Ascending aorta (tissue), 2 donors: ENCODE measurements at regions of chr7 and their contacts with region 1.

Region 1: DNA sequence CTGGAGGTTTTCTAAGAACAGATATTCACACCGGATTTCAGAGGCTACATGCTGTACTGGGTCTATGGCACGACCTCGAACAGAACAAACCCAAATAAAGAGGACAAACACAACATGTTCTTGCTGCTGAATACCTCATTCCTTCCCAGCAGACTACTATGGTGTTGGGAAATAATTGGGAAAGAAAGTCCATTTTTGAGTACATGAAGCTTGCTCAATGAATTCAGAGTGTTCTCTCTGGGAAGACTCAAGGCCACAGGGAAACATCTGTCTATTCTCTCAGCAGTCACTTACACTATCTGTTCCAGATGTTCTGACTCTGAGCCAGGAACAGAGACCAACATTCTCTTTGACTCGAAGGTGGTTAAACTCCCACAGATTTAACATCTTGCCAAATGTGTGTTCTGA is 30.9 kb downstream of the LAMB1 start:
- DNase-seq: no peak
- H3K4me3 ChIP-seq: no peak overlapping the region
- H3K27ac ChIP-seq: peak overlapping the region; percentile 67 to 95
- H3K4me1 ChIP-seq: peaks cover 0 to 34% of the 10 kb centered on the region in 2 donors
- H3K27me3 ChIP-seq: no peaks in the 10 kb centered on the region
- CTCF ChIP-seq: no peak

Region 2: GRCh38 chr7:107836237-107837144 is 135.6 kb before region 1 on chr7:
- intact Hi-C with region 1: no loop called
- DNase-seq: no peak
- H3K4me3 ChIP-seq: no peak overlapping the region
- H3K27ac ChIP-seq: no peak overlapping the region
- H3K4me1 ChIP-seq: no peaks in the 10 kb centered on the region
- H3K27me3 ChIP-seq: no peaks in the 10 kb centered on the region
- CTCF ChIP-seq: no peak

Region 3: GRCh38 chr7:107948645-107949497 is 23.2 kb before region 1 on chr7:
- intact Hi-C with region 1: loop called (anchors 2 kb)
- DNase-seq: peak in 1 of 2 donors; percentile 83
- H3K4me3 ChIP-seq: no peak overlapping the region
- H3K27ac ChIP-seq: peak overlapping the region; percentile 74 to 78
- H3K4me1 ChIP-seq: peaks cover 8 to 39% of the 10 kb centered on the region in 2 donors
- H3K27me3 ChIP-seq: no peaks in the 10 kb centered on the region
- CTCF ChIP-seq: no peak

Region 4: GRCh38 chr7:107989618-107990373 is 17.7 kb after region 1 on chr7:
- intact Hi-C with region 1: loop called (anchors 2 kb)
- DNase-seq: peak in 1 of 2 donors; percentile 90
- H3K4me3 ChIP-seq: no peak overlapping the region
- H3K27ac ChIP-seq: peak overlapping the region; percentile 77 to 80
- H3K4me1 ChIP-seq: peaks cover 4 to 12% of the 10 kb centered on the region in 2 donors
- H3K27me3 ChIP-seq: no peaks in the 10 kb centered on the region
- CTCF ChIP-seq: no peak